ENCODE measurements at regions of chr20 and their contacts with region 1.

Region 1: GRCh38 chr20:58447511-58448391 is 58.7 kb downstream of the VAPB start:
- DNase-seq: no peak
- ATAC-seq: peak in 5 of 8 donors; percentile 40 to 72 (median 61)
- H3K4me3 ChIP-seq: no peak overlapping the region
- H3K27ac ChIP-seq: no peak overlapping the region
- H3K4me1 ChIP-seq: peaks cover 0 to 14% (median 0%) of the 10 kb centered on the region in 9 donors
- H3K27me3 ChIP-seq: no peaks in the 10 kb centered on the region
- CTCF ChIP-seq: peak; percentile 8 to 66 (median 60)

Region 2: DNA sequence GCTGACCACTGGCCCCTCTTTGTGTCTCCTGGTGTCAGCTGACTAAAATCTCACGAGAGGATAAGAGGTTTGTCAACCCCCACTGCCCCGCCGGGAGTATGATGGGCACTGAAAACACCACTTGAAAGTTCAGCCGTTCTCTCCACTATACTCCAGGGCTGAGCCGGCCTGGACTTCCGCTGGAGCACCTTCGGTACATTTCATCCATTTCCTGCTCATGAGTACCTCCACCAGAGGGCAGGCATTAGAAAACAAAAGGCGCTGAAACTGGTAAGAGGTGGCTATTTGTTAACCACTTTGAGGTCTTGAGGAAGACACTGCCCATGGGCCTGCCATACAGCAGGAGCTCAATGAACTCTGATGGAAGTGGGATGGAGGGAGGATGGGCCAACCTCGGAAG is 201.4 kb before region 1 on chr20:
- intact Hi-C with region 1: loop called in 1 of 10 experiments (anchors 5 kb)
- DNase-seq: no peak
- ATAC-seq: no peak
- H3K4me3 ChIP-seq: no peak overlapping the region
- H3K27ac ChIP-seq: no peak overlapping the region
- H3K4me1 ChIP-seq: peaks cover 0 to 6% (median 0%) of the 10 kb centered on the region in 9 donors
- H3K27me3 ChIP-seq: no peaks in the 10 kb centered on the region
- CTCF ChIP-seq: peak in 6 of 9 donors; percentile 21 to 38 (median 31)

Region 3: DNA sequence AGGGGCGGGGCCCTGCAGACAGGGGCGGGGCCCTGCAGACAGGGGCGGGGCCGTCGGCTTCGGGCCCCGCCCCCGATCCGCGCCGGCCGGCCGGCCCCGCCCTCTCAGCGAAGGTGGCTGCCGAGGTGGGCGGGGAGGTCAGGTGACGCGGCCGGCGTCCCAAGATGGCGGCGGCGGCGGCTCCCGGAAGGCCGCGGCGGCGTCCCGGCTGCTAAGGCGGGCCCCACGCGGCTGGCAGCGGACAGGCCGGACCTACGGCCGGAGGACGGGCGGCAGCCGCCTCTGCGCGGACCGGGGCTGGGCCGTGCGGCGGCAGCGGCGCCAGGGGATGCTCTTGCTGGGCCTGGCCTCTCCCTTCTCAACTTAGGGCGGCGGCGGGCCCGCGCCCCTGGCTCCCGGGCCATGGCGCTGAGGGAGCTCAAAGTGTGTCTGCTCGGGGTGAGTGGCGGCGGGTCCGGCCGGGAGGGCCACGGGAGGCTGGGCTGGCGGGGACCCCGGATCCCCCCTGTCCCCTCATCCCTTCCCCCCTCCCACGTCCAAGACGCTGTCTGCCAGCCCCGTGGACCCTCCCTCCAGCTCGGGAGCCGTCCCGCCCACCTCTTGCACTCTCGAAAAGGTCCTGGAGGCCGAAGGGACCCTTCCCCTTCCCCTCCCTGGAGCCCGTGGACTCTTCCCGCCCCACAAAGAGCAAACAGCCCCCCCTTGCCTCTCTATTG is 138.0 kb before region 1 on chr20 and contains the start of gene RAB22A:
- intact Hi-C with region 1: loop called in 1 of 10 experiments (anchors 10 kb)
- DNase-seq: peak; percentile 77 to 85
- ATAC-seq: peak; percentile 87 to 95 (median 94)
- H3K4me3 ChIP-seq: peak within 1 kb of the TSS; percentile 97 to 100 (median 99)
- H3K27ac ChIP-seq: peak within 1 kb of the TSS; percentile 68 to 96 (median 90)
- H3K4me1 ChIP-seq: peaks cover 0 to 53% (median 18%) of the 10 kb centered on the region in 9 donors
- H3K27me3 ChIP-seq: no peaks in the 10 kb centered on the region
- CTCF ChIP-seq: peak in 1 of 9 donors; percentile 7
- total RNA-seq, gene RAB22A: 5.6 to 8.5 (median 7.1) TPM

Region 4: GRCh38 chr20:58584881-58585752 is 137.4 kb after region 1 on chr20:
- intact Hi-C with region 1: no loop called
- DNase-seq: no peak
- ATAC-seq: peak in 1 of 8 donors; percentile 24
- H3K4me3 ChIP-seq: no peak overlapping the region
- H3K27ac ChIP-seq: no peak overlapping the region
- H3K4me1 ChIP-seq: peaks cover 0 to 11% (median 0%) of the 10 kb centered on the region in 9 donors
- H3K27me3 ChIP-seq: peaks cover 0 to 44% (median 18%) of the 10 kb centered on the region in 7 donors
- CTCF ChIP-seq: no peak

Measured in heart right ventricle (tissue), 16 donors.